ENCODE measurements at regions of chr19 and their contacts with region 1.

Region 1: GRCh38 chr19:2543463-2544442 is 67.8 kb downstream of the GADD45B start:
- DNase-seq: peak; percentile 87 to 98
- H3K4me3 ChIP-seq: peak overlapping the region in 1 of 2 donors; percentile 49
- H3K27ac ChIP-seq: peak overlapping the region; percentile 90 to 97
- H3K4me1 ChIP-seq: peaks cover 39 to 65% of the 10 kb centered on the region in 2 donors
- H3K27me3 ChIP-seq: no peaks in the 10 kb centered on the region
- CTCF ChIP-seq: peak in 1 of 3 experiments; percentile 21

Region 2: DNA sequence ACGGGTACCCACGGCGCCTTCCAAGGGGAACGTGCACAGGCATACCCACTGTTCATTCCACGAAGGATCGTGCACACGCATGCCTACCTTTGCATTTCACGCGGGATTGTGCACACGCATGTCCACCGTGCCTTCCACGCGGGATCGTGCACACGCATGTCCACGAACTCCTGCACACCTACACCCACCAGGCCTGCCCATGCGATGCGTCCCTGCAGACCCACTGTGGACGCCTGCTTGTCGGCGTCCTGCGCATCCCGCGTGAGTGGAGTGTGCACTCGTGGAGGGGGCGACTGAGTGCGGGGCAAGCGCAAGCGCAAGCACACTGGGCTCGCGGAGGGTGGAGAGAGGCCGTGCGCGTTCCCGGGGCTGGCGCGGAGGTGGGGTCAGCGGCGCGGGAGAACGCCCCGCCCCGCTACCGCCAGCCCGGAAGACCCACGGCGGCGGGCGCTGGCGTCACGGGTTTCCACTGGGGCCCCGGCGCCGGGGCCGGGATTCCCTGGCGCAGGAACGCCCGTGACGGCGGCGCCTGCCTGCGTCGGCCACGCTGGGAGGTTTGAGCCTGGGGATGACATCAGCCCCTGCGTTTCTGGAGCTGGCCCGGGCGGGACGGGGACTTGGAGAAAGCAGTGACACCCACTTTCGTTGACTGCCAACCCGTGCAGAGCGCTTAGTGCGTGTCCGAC is 49.2 kb before region 1 on chr19:
- intact Hi-C with region 1: loop called (anchors 1 kb)
- DNase-seq: peak; percentile 69 to 95
- H3K4me3 ChIP-seq: peak overlapping the region; percentile 45 to 68
- H3K27ac ChIP-seq: peak overlapping the region; percentile 84 to 94
- H3K4me1 ChIP-seq: peaks cover 7 to 19% of the 10 kb centered on the region in 2 donors
- H3K27me3 ChIP-seq: no peaks in the 10 kb centered on the region
- CTCF ChIP-seq: no peak

Region 3: GRCh38 chr19:2524838-2525723 is 18.7 kb before region 1 on chr19:
- intact Hi-C with region 1: loop called (anchors 1 kb)
- DNase-seq: peak; percentile 65 to 86
- H3K4me3 ChIP-seq: peak overlapping the region; percentile 28 to 55
- H3K27ac ChIP-seq: peak overlapping the region; percentile 63 to 76
- H3K4me1 ChIP-seq: peaks cover 7 to 21% of the 10 kb centered on the region in 2 donors
- H3K27me3 ChIP-seq: no peaks in the 10 kb centered on the region
- CTCF ChIP-seq: no peak

Region 4: DNA sequence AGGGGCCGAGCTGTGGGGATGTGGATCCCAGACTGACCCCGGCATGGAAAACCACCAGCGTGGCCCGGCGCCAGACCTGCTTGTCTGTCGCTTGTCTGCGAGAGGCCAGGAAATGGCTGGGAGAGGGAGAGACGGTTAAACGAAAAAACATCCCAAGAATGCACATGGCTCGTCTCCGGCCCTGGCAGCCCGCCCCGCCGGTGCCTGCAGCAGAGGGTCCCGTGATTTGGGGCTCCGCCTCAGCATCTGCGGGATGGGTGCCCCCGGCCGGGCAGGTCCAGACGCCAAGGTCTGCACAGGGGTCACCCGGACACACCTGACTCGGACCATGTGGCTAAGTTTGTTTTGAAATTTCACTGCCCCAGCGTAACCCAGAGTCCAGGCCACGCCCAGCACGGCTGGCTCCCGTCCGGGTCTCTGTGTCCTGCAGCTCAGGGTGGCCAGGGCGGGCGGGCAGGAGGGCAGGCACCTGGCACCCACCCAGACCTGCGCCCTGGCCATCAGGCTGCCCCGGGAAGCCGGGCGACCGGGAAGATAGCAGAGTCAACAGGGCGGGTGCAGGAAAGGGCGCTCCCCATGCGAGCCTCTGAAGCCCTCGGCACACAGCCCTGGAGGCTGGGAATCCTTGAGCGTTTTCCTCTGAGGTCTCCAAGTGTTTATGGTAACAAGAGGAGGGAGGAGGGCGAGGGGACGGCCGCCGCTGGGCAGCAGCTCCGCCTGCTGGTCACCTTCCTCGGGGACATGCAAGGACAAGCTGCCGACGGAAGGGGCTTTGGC is 35.3 kb after region 1 on chr19:
- intact Hi-C with region 1: loop called (anchors 1 kb)
- DNase-seq: peak; percentile 75 to 96
- H3K4me3 ChIP-seq: peak overlapping the region; percentile 50 to 60
- H3K27ac ChIP-seq: peak overlapping the region; percentile 84 to 90
- H3K4me1 ChIP-seq: peaks cover 13 to 40% of the 10 kb centered on the region in 2 donors
- H3K27me3 ChIP-seq: no peaks in the 10 kb centered on the region
- CTCF ChIP-seq: peak; percentile 89 to 98 (median 97)

Region 5: DNA sequence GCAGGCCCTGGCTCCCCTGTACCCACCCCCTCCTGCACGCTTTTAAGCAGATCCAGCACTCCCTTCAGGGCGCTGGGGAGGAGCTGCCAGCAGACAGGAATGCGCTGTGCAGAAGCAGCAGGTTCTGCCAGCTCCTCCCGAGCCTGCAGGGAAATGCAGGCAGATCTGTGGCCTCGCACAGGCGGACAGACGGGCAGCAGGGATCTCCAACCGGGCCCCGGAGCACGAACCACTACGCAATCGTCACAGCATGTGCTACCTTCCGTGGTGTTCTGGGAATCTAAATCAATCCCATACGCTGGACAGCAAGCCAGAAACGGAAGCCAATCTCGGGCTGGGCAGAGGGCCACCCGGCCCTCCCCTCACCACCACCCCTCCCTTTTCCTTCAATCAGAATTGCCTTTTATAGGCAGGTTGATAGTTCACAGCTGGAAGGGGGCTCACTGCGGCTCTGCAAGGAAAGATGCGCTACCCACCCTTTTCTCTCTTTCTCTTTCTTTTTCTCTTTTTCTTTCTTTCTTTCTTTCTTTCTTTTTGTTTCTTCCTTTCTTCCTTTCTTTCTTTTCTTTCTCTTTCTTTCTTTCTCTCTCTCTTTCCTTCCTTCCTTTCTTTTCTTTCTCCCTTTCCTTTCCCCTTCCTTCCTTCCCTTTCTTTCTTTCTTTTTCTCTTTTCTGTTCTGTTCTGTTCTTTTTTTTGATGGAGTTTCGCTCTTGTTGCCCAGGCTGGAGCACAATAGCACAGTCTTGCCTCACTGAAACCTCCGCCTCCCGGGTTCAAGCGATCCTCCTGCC is 58.8 kb after region 1 on chr19:
- intact Hi-C with region 1: loop called (anchors 2 kb)
- DNase-seq: peak; percentile 81 to 96
- H3K4me3 ChIP-seq: peak overlapping the region; percentile 38 to 55
- H3K27ac ChIP-seq: peak overlapping the region; percentile 92 to 97
- H3K4me1 ChIP-seq: peaks cover 17 to 23% of the 10 kb centered on the region in 2 donors
- H3K27me3 ChIP-seq: no peaks in the 10 kb centered on the region
- CTCF ChIP-seq: no peak

Region 6: DNA sequence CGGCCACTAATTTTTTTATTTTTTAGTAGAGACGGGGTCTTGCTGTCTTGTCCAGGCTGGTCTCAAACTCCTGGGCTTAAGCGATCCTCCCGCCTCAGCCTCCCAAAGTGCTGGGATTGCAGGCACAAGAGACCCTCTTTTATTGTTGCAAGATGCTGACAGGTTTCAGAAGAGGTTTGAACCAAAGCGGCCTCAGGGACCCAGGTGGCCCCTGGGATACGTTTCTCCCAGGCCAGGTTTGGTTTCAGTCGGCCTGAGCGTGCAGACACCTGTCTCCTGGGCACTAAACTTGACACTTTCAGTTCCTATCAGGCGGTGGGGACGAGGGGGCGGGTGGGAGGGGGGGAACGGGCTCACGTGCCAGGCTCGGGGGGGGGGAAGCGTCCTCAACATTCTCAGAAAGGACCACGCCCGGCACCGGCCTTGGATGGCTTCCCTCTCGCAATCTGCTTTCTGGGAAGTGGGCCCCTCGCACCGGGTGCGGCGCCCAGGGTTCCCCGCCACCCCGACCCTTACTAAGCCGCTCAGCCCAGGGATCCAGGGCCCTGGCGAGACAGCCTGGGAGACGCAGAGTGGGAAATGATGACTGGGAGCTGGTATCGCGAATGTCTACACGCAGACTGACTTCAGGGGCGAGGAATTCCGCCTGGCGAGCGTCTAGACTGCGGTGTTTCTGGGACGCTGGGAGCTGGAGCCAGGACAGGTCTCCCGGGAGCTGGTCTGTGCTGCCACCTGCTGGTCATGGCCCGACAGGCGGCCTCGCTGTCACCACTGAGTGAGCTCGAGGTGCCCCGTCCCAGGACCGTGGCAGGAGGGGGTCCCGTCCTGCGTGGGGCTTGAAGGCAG is 67.1 kb after region 1 on chr19:
- intact Hi-C with region 1: loop called (anchors 2 kb)
- DNase-seq: peak; percentile 80 to 97
- H3K4me3 ChIP-seq: peak overlapping the region; percentile 51 to 61
- H3K27ac ChIP-seq: peak overlapping the region; percentile 92 to 94
- H3K4me1 ChIP-seq: peaks cover 0 to 9% of the 10 kb centered on the region in 2 donors
- H3K27me3 ChIP-seq: no peaks in the 10 kb centered on the region
- CTCF ChIP-seq: peak; percentile 93 to 99 (median 94)

Region 7: DNA sequence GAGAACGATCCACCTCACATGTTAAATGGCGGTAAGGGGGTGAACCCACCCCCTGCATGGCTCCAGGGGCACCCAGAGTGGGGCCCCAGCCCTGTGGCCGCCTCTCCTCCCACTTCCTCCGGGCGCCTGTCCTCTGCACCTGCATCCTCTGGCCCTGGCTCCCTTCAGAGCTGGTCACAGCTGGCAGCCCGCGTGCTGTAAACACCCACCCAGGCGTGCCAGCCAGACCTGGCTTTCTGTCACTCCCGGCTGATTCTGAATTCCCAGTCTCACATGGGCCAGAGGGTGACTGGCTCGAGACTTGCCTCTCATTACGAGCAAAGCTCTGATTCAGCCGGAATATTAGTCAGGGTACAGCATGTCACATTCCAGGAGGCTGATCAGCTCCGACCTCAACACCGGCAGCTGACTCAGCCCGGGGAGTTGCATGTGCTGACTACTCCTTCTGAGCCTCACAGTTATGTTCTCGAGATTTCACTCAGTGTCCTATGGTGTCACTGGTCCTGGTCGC is 83.6 kb after region 1 on chr19:
- intact Hi-C with region 1: loop called (anchors 5 kb)
- DNase-seq: peak; percentile 93 to 98
- H3K4me3 ChIP-seq: no peak overlapping the region
- H3K27ac ChIP-seq: peak overlapping the region; percentile 90 to 95
- H3K4me1 ChIP-seq: peaks cover 17 to 18% of the 10 kb centered on the region in 2 donors
- H3K27me3 ChIP-seq: no peaks in the 10 kb centered on the region
- CTCF ChIP-seq: no peak

Region 8: DNA sequence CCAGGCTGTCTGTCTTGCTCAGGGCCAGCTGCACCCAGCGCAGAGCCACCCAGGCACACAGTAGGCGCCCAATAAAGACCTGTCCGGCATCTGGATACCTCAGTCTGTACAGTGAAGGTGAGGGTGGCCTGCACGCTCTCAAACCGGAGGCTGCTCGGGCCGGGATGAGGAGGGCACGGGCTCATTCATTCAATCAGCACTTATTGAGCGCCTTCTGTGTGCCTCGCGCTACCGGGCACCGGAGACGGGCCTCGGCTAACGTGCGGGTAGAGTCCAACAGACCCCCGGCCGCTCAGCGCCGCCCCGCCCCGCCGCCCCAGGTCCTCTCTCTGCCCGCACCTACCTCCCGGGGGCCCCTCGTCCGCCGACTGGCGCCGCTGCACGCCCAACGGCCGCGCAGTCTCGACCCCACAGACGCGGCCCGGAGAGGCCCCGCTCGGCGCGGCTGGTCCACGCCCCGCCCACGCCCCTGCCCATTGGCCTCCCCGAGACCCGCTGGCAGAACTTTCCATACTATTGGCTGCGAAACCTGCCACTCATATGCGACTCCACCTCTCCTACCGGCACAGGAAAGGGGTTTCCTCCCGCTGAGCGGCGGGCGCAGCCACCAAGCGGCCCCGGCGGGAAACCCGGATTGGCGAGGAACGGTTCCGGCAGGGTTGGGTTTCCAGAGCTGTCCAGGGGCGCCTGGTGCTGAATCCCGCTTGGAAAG is 196.0 kb after region 1 on chr19 and contains the start of gene SLC39A3:
- intact Hi-C with region 1: no loop called
- DNase-seq: peak; percentile 94 to 99
- H3K4me3 ChIP-seq: peak within 1 kb of the TSS; percentile 96 to 100
- H3K27ac ChIP-seq: peak within 1 kb of the TSS; percentile 53
- H3K4me1 ChIP-seq: peaks cover 6 to 11% of the 10 kb centered on the region in 2 donors
- H3K27me3 ChIP-seq: no peaks in the 10 kb centered on the region
- CTCF ChIP-seq: peak; percentile 20 to 40 (median 27)
- total RNA-seq, gene SLC39A3: 72.7 TPM